ENCODE measurements at regions of chr17 and their contacts with region 1.

Region 1: GRCh38 chr17:17496189-17497064 is at the start of gene RASD1:
- DNase-seq: peak; percentile 95
- CTCF ChIP-seq: peak; percentile 93

Region 2: GRCh38 chr17:17467720-17468119 is 28.7 kb before region 1 on chr17:
- CTCF ChIA-PET with region 1: interaction called, 20 read pairs
- POLR2A ChIA-PET with region 1: interaction called, 5 read pairs
- DNase-seq: no peak
- CTCF ChIP-seq: no peak

Region 3: DNA sequence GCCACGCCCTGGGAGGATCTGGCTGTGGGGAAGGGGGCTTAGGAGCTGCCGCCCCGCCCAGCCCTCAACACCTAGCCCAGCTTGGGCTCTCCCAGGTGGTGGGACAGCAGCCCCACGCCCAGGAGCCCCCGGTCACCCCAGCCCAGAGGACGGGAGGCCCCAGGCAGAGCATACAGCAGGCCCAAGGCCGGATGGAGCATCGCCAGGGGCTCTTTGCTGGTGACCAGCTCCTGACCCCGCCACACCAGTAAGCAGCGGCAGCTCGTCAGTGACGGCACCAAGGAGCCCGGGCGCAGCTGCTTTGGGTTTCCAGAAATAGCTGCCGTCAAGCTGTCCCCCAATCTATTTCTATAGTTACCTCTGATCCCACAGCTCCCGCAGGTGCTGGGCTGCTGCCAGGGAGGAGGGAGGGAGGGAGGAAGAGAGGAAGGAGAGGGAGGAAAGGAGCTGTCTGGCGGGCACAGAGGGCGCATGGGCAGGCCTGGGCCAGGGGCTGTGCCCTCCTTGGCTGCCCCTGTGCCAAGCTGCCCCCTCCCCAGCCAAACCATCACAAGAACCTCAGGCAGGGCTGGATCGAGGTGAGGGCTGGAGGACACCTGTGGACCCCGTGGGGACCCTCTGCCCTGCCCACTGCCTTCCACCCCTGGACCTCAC is 10.5 kb after region 1 on chr17:
- CTCF ChIA-PET with region 1: interaction called, 32 read pairs
- POLR2A ChIA-PET with region 1: interaction called, 3 read pairs
- DNase-seq: no peak
- CTCF ChIP-seq: no peak

Region 4: DNA sequence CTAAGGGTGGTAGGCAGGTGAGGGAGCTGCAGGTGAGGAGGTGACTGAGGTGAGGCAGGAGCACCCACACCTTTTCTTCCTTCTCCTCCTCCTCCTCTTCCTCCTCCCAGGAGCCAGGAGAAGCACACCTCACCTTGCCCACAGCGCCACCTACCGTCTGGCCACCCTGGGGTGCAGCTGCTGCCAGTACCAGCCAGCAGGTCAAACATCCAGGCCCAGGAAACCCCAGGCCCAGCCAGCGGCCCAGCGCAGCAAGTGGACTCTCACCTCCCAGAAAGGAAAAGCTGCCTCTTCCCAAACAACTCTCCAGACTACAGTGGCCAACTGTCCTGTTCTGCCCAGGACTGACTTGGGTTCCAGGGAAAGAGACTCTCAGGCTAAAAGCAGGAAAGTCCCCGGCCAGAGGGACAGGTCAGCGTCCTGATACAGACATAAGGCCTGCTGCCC is 72.3 kb after region 1 on chr17:
- CTCF ChIA-PET with region 1: interaction called, 19 read pairs
- POLR2A ChIA-PET with region 1: no interaction called
- DNase-seq: peak; percentile 80
- CTCF ChIP-seq: peak; percentile 57

Region 5: GRCh38 chr17:17641621-17642409 is 145.4 kb after region 1 on chr17:
- CTCF ChIA-PET with region 1: interaction called, 82 read pairs
- POLR2A ChIA-PET with region 1: no interaction called
- DNase-seq: peak; percentile 77
- CTCF ChIP-seq: peak; percentile 88

Region 6: GRCh38 chr17:17919169-17920107 is 423.0 kb after region 1 on chr17:
- CTCF ChIA-PET with region 1: interaction called, 10 read pairs
- POLR2A ChIA-PET with region 1: no interaction called
- DNase-seq: peak; percentile 79
- CTCF ChIP-seq: peak; percentile 85

Measured in GM10248 (cell line).